WTC11 (cell line): ENCODE measurements at regions of chr1 and their contacts with region 1.

Region 1: GRCh38 chr1:234499119-234499942 is 20.4 kb upstream of the TARBP1 start:
- DNase-seq: peak; percentile 91
- ATAC-seq: peak; percentile 94
- H3K4me3 Mint-ChIP-seq: no peak overlapping the region
- H3K27ac Mint-ChIP-seq: no peak overlapping the region
- H3K4me1 Mint-ChIP-seq: peaks cover 51% of the 10 kb centered on the region
- H3K27me3 Mint-ChIP-seq: peaks cover 15% of the 10 kb centered on the region; the same call in 1 of the 2 replicates
- CTCF ChIP-seq: peak; percentile 63

Region 2: GRCh38 chr1:234469376-234469775 is 30.0 kb before region 1 on chr1:
- CTCF ChIA-PET with region 1: no interaction called
- POLR2A ChIA-PET with region 1: no interaction called
- DNase-seq: no peak
- ATAC-seq: no peak
- H3K4me3 Mint-ChIP-seq: no peak overlapping the region
- H3K27ac Mint-ChIP-seq: no peak overlapping the region
- H3K4me1 Mint-ChIP-seq: peaks cover 4% of the 10 kb centered on the region
- H3K27me3 Mint-ChIP-seq: no peaks in the 10 kb centered on the region
- CTCF ChIP-seq: no peak

Region 3: GRCh38 chr1:234509452-234510328 is 10.4 kb after region 1 on chr1:
- CTCF ChIA-PET with region 1: interaction called, 25 read pairs
- POLR2A ChIA-PET with region 1: no interaction called
- DNase-seq: no peak
- ATAC-seq: peak; percentile 23; the same call in 1 of the 2 replicates
- H3K4me3 Mint-ChIP-seq: 0 out of 2 replicates have a peak overlapping the region, but pooled peaks have one; percentile 14
- H3K27ac Mint-ChIP-seq: peak overlapping the region; percentile 86
- H3K4me1 Mint-ChIP-seq: peaks cover 51% of the 10 kb centered on the region
- H3K27me3 Mint-ChIP-seq: no peaks in the 10 kb centered on the region
- CTCF ChIP-seq: no peak

Region 4: DNA sequence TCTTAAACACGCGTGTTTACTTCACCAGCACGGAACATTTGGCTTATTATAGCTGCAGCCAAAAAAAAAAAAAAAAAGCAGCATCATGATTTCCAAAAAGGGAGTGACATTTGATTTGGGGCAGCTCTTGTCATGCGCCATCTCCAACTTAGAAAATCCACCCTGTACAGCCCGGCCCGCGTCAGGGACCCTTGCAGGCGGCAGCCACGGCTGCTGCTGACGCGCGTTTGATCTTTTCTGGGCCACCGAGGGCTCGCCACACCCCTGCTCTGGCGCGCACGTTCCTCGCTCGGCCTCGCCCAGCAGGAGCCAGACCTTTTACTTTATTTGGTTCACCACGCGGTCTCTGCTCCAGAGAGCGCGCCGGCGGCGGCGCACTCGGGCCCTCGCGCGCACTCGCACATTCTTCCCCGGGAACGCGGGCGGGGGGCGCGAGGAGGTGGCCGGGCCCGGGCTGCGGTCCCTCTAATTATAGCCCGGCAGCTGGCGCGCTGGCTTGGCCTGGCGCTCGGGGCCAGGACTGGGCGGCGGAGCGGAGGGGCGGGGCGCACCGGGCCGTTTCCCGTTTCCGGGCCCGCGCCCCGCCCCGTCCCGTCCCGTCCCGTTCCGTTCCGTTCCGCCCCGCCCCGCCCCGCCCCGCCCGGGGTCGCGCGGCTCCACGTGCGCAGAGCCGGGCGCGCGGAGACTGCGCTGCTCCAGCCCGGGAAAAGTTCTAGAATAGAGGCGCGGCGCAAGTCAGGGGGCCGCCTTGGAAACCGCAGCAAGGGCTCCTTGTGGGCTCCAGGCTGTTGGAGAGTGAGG is 100.5 kb after region 1 on chr1:
- CTCF ChIA-PET with region 1: interaction called, 15 read pairs
- POLR2A ChIA-PET with region 1: interaction called, 3 read pairs
- DNase-seq: peak; percentile 85
- ATAC-seq: peak; percentile 89
- H3K4me3 Mint-ChIP-seq: peak overlapping the region; percentile 76
- H3K27ac Mint-ChIP-seq: peak overlapping the region; percentile 84
- H3K4me1 Mint-ChIP-seq: peaks cover 58% of the 10 kb centered on the region
- H3K27me3 Mint-ChIP-seq: no peaks in the 10 kb centered on the region; the same call in 1 of the 2 replicates
- CTCF ChIP-seq: no peak

Region 5: DNA sequence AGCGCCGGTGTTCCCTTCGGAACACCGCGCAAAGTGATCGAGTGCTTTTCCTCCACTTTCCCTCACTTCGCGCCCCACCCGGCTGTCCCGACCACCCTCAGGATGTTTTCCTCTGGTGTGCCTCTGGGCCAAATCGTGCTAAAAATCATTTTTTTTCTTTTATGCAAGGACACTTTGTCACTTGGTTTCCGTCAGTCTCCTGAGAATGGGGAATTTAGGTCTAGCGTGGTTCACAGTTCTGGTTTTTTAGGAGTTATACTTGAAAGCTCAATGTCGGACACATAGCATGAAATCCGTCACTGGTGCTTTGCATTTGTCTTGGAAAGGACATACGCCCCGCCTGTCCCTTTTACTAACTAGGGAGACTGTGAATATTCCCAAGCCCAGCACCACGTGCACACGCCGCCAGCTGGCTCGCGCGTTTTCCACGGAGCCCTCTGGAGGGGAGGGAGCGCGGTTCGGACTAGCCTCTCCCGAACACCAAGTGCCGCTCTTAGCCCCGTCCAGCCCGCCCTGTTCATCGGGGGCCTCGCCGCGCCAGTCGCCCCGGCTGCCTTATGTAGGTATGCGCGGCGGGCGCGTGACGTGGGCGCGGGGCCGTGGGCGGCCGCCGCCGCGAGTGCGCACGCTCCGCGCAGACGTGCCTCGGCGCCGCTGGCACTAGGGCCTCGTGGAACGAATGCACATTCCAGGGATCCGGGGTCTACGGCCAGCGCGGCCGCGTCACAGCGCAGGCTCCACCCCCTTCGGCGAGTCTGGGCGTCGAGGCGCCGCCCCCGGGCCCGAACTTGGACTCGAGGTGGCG is 111.2 kb after region 1 on chr1:
- CTCF ChIA-PET with region 1: interaction called, 9 read pairs
- POLR2A ChIA-PET with region 1: interaction called, 14 read pairs
- DNase-seq: peak; percentile 87
- ATAC-seq: peak; percentile 65
- H3K4me3 Mint-ChIP-seq: peak overlapping the region; percentile 85
- H3K27ac Mint-ChIP-seq: peak overlapping the region; percentile 99
- H3K4me1 Mint-ChIP-seq: peaks cover 56% of the 10 kb centered on the region
- H3K27me3 Mint-ChIP-seq: no peaks in the 10 kb centered on the region
- CTCF ChIP-seq: no peak

Region 6: DNA sequence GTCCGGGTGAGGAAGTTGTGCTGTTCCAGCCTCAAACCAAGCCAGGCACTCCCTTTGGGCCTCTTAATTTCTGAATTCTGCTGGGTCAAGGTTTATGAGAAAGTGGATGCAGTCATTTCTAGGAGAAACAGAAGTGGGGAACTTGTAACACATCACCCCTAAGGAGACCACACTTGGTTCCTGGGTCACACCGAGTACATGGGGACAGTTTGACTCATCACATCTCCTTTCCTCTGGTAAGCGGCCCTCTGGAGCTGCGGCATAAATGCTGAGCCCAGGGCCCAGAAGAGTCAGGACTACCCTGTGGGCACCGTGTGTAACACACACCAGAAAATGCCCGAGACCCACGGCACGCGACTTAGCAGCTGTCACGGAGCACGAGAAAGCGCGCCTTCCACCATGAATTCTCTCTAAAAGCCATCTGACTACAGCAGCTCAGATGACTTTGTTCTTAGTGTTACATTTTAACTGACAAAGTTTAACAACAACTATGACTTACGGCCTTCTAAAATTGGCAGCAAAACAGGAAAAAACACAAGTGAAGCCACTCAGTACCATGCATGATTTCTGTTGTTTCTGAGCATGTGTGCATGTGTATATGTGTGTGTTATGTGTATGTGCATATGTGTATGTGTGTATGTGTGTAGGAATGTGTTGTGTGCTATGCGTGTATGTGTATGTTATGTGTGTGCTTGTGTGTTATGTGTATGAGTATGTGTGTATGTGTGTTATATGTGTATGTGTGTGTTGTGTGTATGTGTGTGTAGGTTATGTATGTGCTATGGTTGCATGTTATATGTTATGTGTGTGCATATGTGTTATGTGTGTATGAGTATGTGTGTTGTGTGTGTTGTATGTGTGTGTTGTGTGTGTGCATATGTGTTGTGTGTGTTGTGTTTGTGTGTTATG is 578.5 kb after region 1 on chr1:
- CTCF ChIA-PET with region 1: interaction called, 22 read pairs
- POLR2A ChIA-PET with region 1: interaction called, 3 read pairs
- DNase-seq: no peak
- ATAC-seq: no peak
- H3K4me3 Mint-ChIP-seq: no peak overlapping the region
- H3K27ac Mint-ChIP-seq: no peak overlapping the region
- H3K4me1 Mint-ChIP-seq: peaks cover 12% of the 10 kb centered on the region
- H3K27me3 Mint-ChIP-seq: no peaks in the 10 kb centered on the region
- CTCF ChIP-seq: no peak

Region 7: GRCh38 chr1:235093696-235094592 is 594.6 kb after region 1 on chr1:
- CTCF ChIA-PET with region 1: interaction called, 37 read pairs
- POLR2A ChIA-PET with region 1: interaction called, 3 read pairs
- DNase-seq: peak; percentile 87
- ATAC-seq: peak; percentile 64
- H3K4me3 Mint-ChIP-seq: peak overlapping the region; percentile 67
- H3K27ac Mint-ChIP-seq: peak overlapping the region; percentile 14; the same call in 1 of the 2 replicates
- H3K4me1 Mint-ChIP-seq: peaks cover 36% of the 10 kb centered on the region
- H3K27me3 Mint-ChIP-seq: no peaks in the 10 kb centered on the region; the same call in 1 of the 2 replicates
- CTCF ChIP-seq: peak; percentile 91